PC-9 (cell line): ENCODE measurements at regions of chr9 and their contacts with region 1.

Region 1: DNA sequence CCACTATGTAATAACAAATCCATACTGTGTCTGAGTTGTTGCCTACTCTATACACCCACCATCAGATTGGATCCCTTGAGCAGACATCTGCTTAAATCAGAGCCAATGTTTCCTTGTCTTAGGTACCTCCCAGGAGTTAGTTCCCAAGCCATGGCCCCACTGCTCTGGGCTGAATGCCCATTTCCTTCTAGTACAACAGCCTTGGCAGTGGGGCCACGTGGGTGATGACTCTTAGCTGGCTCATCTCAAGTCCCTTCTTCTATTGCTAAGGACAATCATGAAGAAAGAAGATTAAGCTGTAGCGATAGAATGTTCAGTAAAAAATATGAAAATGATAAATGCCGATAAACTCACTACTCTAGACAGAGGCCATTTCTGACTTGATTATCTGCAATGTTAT is 16.6 kb downstream of the PTGR1 start:
- DNase-seq: no peak
- H3K4me3 ChIP-seq: no peak overlapping the region
- H3K27ac ChIP-seq: 0 out of 2 replicates have a peak overlapping the region, but pooled peaks have one; percentile 15
- H3K4me1 ChIP-seq: no peaks in the 10 kb centered on the region
- H3K27me3 ChIP-seq: no peaks in the 10 kb centered on the region
- CTCF ChIP-seq: no peak

Region 2: GRCh38 chr9:111356481-111357244 is 226.2 kb before region 1 on chr9:
- CTCF ChIA-PET with region 1: no interaction called
- POLR2A ChIA-PET with region 1: interaction called, 11 read pairs
- intact Hi-C with region 1: no loop called
- DNase-seq: peak; percentile 40 to 70
- H3K4me3 ChIP-seq: no peak overlapping the region
- H3K27ac ChIP-seq: no peak overlapping the region
- H3K4me1 ChIP-seq: peaks cover 5% of the 10 kb centered on the region
- H3K27me3 ChIP-seq: no peaks in the 10 kb centered on the region
- CTCF ChIP-seq: no peak

Region 3: DNA sequence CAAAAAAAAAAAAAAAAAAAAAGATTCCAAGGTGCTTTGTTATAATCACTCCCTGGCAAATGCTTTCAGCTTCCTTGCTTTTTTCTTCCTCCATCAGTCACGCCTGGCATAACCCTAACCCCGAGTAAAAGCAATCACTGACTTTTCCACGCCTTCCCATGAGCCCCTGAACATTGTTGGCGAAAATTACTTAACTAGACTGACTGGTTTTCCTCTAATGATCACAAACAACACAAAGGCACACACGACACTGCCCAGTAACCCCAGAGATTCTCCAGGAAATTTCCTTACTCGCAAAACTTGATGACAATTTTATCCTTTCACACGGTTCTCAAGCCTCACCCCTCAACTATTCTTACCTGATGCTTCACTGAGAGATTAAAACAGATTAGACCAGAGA is 28.0 kb after region 1 on chr9:
- CTCF ChIA-PET with region 1: no interaction called
- POLR2A ChIA-PET with region 1: interaction called, 21 read pairs
- intact Hi-C with region 1: no loop called
- DNase-seq: peak in 1 of 2 experiments; percentile 88
- H3K4me3 ChIP-seq: no peak overlapping the region
- H3K27ac ChIP-seq: peak overlapping the region; percentile 74
- H3K4me1 ChIP-seq: peaks cover 21% of the 10 kb centered on the region
- H3K27me3 ChIP-seq: no peaks in the 10 kb centered on the region
- CTCF ChIP-seq: no peak

Region 4: DNA sequence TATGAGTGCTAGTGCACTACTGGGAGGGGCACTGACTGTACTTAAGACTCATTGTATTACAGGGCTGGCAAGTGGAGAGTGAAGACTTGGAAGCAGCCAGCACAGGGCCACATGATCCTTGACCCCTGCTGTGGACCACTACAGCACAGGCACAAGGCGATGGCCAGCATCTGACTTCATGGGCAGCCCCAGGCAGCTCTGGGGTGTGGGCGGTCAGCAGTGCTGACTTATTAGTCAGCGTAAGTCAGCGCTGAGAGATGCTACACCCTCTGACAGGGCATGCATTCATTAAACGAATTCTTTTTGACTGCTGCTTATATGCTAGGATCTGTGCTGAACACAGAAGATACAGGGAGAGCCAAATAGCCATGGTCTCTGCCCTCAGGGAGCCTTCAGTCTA is 1298.5 kb after region 1 on chr9:
- CTCF ChIA-PET with region 1: no interaction called
- POLR2A ChIA-PET with region 1: no interaction called
- intact Hi-C with region 1: no loop called
- DNase-seq: peak; percentile 36 to 57
- H3K4me3 ChIP-seq: no peak overlapping the region
- H3K27ac ChIP-seq: no peak overlapping the region
- H3K4me1 ChIP-seq: peaks cover 9% of the 10 kb centered on the region; the same call in 1 of the 2 replicates
- H3K27me3 ChIP-seq: no peaks in the 10 kb centered on the region
- CTCF ChIP-seq: no peak